ENCODE measurements at regions of chr5 and their contacts with region 1.

Region 1: DNA sequence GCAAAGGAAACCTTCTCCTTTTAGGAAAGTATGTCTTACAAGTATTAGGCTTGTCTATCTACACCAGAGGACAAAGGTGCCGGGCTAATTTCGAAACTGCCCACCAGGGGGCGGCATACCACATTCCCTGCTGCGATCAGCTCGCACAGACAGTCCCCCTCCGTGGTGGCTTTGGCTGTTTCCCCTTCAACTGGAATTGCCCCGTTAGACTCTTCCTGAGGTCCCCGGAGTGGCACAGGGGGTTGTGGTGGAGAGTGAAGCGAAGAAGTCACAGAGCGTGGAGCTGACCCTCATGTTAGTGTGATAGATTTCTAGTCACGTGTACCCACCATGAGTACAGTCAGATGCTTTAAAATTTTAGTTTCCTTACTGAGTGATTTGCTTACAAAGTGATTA is 17.5 kb downstream of the PTTG1 start:
- DNase-seq: peak; percentile 74 to 89 (median 84)
- ATAC-seq: peak; percentile 91
- H3K4me3 ChIP-seq: peak overlapping the region; percentile 64
- H3K4me3 Mint-ChIP-seq: peak overlapping the region; percentile 76 to 98 (median 86)
- H3K27ac ChIP-seq: peak overlapping the region; percentile 48
- H3K27ac Mint-ChIP-seq: peak overlapping the region; percentile 47 to 97 (median 73)
- H3K4me1 ChIP-seq: peaks cover 0 to 3% of the 10 kb centered on the region in 2 donors
- H3K4me1 Mint-ChIP-seq: peaks cover 0 to 57% (median 6%) of the 10 kb centered on the region in 7 donors
- H3K27me3 ChIP-seq: no peaks in the 10 kb centered on the region
- H3K27me3 Mint-ChIP-seq: peaks cover 0 to 14% (median 12%) of the 10 kb centered on the region in 5 donors

Region 2: GRCh38 chr5:160418561-160419457 is 20.4 kb before region 1 on chr5 and contains the start of gene SLU7:
- CTCF ChIA-PET with region 1: interaction called, 42 read pairs
- POLR2A ChIA-PET with region 1: interaction called, 22 read pairs
- intact Hi-C with region 1: loop called (anchors 1 kb)
- DNase-seq: peak; percentile 80 to 93 (median 91)
- ATAC-seq: peak; percentile 86
- H3K4me3 ChIP-seq: peak within 1 kb of the TSS; percentile 94
- H3K4me3 Mint-ChIP-seq: peak within 1 kb of the TSS; percentile 91 to 100 (median 96)
- H3K27ac ChIP-seq: peak within 1 kb of the TSS; percentile 98
- H3K27ac Mint-ChIP-seq: peak within 1 kb of the TSS; percentile 95 to 100 (median 98)
- H3K4me1 ChIP-seq: peaks cover 23 to 28% of the 10 kb centered on the region in 2 donors
- H3K4me1 Mint-ChIP-seq: peaks cover 45 to 85% (median 79%) of the 10 kb centered on the region in 7 donors
- H3K27me3 ChIP-seq: no peaks in the 10 kb centered on the region
- H3K27me3 Mint-ChIP-seq: no peaks in the 10 kb centered on the region
- total RNA-seq, gene SLU7: 53.0 to 85.3 (median 77.0) TPM

Region 3: DNA sequence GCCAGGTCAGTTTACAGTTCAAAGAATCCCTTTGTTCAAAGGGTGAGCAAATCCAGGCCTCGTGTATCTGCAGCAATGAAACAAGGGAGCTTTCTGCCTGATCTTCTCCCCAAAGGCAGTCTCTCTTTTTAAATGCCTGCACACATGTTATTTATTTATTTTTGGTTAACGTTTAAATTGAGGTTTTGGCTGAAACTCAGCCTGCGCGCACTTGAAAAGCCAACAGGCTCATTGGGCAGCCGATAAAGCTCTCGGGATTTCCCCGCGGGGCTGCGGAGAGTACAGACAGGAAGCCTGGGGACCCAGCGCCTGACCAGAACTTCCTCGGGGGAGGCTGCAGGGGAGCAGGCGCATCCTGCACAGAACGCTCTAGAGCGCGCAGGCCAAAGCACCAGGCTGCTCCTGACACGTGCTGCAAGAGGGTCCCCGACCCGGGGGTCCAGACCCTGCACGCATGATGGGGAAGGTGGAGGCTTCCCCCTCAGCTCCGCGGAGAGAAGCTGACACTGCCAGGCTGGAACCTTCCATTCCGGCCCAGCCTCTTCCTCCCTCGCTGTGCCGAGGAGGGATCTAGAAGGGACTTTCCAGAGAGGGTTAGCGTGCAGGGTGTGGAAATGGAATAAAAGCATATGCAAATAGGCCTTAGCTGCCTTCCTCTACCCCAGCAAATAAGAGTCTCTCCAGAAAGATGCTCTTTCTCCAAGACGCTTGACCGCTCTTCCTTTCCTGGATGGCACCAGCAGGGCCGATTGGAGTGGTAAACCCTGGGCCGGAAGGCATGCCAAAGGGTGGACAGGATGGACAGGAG is 28.6 kb after region 1 on chr5:
- CTCF ChIA-PET with region 1: interaction called, 22 read pairs
- POLR2A ChIA-PET with region 1: interaction called, 11 read pairs
- intact Hi-C with region 1: loop called (anchors 1 kb)
- DNase-seq: peak; percentile 24 to 88 (median 48)
- ATAC-seq: peak; percentile 91
- H3K4me3 ChIP-seq: peak overlapping the region; percentile 69
- H3K4me3 Mint-ChIP-seq: peak overlapping the region; percentile 80 to 100 (median 88)
- H3K27ac ChIP-seq: peak overlapping the region; percentile 48
- H3K27ac Mint-ChIP-seq: peak overlapping the region; percentile 73 to 99 (median 81)
- H3K4me1 ChIP-seq: peaks cover 28 to 34% of the 10 kb centered on the region in 2 donors
- H3K4me1 Mint-ChIP-seq: peaks cover 36 to 79% (median 70%) of the 10 kb centered on the region in 7 donors
- H3K27me3 ChIP-seq: no peaks in the 10 kb centered on the region
- H3K27me3 Mint-ChIP-seq: no peaks in the 10 kb centered on the region

Region 4: GRCh38 chr5:160627921-160628618 is 188.9 kb after region 1 on chr5:
- CTCF ChIA-PET with region 1: interaction called, 3 read pairs
- POLR2A ChIA-PET with region 1: no interaction called
- intact Hi-C with region 1: loop called in 1 of 2 experiments (anchors 10 kb)
- DNase-seq: no peak
- ATAC-seq: no peak
- H3K4me3 ChIP-seq: no peak overlapping the region
- H3K4me3 Mint-ChIP-seq: no peak overlapping the region
- H3K27ac ChIP-seq: no peak overlapping the region
- H3K27ac Mint-ChIP-seq: no peak overlapping the region
- H3K4me1 ChIP-seq: no peaks in the 10 kb centered on the region
- H3K4me1 Mint-ChIP-seq: no peaks in the 10 kb centered on the region
- H3K27me3 ChIP-seq: no peaks in the 10 kb centered on the region
- H3K27me3 Mint-ChIP-seq: peaks cover 6 to 15% (median 10%) of the 10 kb centered on the region in 5 donors

Region 5: GRCh38 chr5:160787240-160787639 is 348.0 kb after region 1 on chr5:
- CTCF ChIA-PET with region 1: interaction called, 4 read pairs
- POLR2A ChIA-PET with region 1: no interaction called
- intact Hi-C with region 1: loop called in 1 of 2 experiments (anchors 1 kb)
- DNase-seq: no peak
- ATAC-seq: no peak
- H3K4me3 ChIP-seq: no peak overlapping the region
- H3K4me3 Mint-ChIP-seq: no peak overlapping the region
- H3K27ac ChIP-seq: no peak overlapping the region
- H3K27ac Mint-ChIP-seq: no peak overlapping the region
- H3K4me1 ChIP-seq: no peaks in the 10 kb centered on the region
- H3K4me1 Mint-ChIP-seq: no peaks in the 10 kb centered on the region
- H3K27me3 ChIP-seq: no peaks in the 10 kb centered on the region
- H3K27me3 Mint-ChIP-seq: peaks cover 0 to 17% (median 13%) of the 10 kb centered on the region in 5 donors

Region 6: DNA sequence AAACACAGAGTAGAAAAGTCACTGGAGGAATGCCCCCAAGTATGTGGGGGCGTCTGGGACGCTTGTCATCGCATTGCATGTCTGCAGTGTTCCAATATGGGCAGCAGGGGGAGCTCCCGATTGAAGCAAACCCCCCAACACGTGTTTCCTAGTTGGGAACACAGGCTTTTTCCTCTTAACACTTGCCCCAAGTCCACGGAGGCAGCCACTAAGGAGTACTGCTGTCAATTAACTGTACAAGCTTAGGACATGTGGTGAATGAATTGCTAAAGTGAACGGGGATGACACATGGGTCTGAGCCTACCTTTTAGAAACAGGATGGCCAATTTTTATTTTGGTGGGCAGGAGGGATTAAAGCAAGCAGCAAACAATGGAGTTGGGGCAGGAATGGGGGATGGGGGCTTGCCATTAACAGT is 1105.2 kb after region 1 on chr5:
- CTCF ChIA-PET with region 1: no interaction called
- POLR2A ChIA-PET with region 1: no interaction called
- intact Hi-C with region 1: loop called in 1 of 2 experiments (anchors 10 kb)
- DNase-seq: no peak
- ATAC-seq: no peak
- H3K4me3 ChIP-seq: no peak overlapping the region
- H3K4me3 Mint-ChIP-seq: no peak overlapping the region
- H3K27ac ChIP-seq: no peak overlapping the region
- H3K27ac Mint-ChIP-seq: no peak overlapping the region
- H3K4me1 ChIP-seq: no peaks in the 10 kb centered on the region
- H3K4me1 Mint-ChIP-seq: peaks cover 11 to 28% (median 15%) of the 10 kb centered on the region in 7 donors
- H3K27me3 ChIP-seq: peaks cover 0 to 4% of the 10 kb centered on the region in 2 donors
- H3K27me3 Mint-ChIP-seq: peaks cover 46 to 54% (median 51%) of the 10 kb centered on the region in 5 donors